PC-9 (cell line): ENCODE measurements at regions of chr2 and their contacts with region 1.

Region 1: DNA sequence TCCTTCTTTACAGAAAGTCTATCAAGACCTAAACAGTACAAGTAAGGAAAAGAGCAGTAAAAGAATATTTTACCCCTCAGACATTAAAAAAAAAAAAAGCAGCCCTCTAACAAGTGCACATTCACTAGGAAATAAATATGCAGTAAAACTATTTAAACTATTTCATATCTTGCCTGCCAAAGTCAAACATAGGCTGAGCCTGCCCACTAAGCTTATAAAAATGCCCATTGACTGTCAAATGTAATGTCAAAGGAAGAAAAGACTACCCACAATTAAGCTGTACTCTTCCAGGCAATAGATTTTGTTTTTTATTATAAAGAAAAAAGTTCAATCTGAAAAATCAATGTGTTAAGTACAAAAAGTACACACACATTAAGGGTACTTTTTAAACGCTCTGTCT is 11.8 kb downstream of the ALS2 start:
- DNase-seq: no peak
- H3K4me3 ChIP-seq: no peak overlapping the region
- H3K27ac ChIP-seq: no peak overlapping the region
- H3K4me1 ChIP-seq: no peaks in the 10 kb centered on the region
- H3K27me3 ChIP-seq: no peaks in the 10 kb centered on the region
- CTCF ChIP-seq: no peak

Region 2: GRCh38 chr2:201746551-201746950 is 22.4 kb before region 1 on chr2:
- CTCF ChIA-PET with region 1: no interaction called
- POLR2A ChIA-PET with region 1: interaction called, 18 read pairs
- intact Hi-C with region 1: no loop called
- DNase-seq: no peak
- H3K4me3 ChIP-seq: no peak overlapping the region
- H3K27ac ChIP-seq: no peak overlapping the region
- H3K4me1 ChIP-seq: no peaks in the 10 kb centered on the region
- H3K27me3 ChIP-seq: no peaks in the 10 kb centered on the region
- CTCF ChIP-seq: no peak

Region 3: DNA sequence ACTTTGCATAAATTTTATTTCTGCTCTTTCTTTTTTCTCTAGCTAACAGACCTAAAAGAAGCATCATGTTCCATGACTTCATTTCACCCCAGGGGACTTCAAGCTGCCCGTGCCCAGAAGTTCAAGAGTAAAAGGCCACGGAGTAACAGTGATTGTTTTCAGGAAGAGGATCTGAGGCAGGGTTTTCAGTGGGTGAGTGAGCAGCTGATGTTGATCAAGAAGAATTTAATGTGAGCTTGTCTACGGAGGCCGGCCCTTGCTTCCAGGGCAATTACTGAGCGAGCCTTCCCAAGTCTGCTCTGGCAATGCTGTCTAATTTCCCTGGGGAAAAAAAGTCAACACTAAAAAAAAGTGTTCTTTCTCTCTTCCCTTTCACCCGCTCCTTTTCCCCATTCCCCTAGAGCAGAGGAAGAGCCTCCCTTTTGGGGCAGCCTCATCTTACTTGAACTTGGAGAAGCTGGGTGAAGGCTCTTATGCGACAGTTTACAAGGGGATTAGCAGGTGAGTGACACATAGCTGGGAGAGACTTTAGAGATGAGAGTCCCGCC is 38.6 kb after region 1 on chr2:
- CTCF ChIA-PET with region 1: no interaction called
- POLR2A ChIA-PET with region 1: no interaction called
- intact Hi-C with region 1: no loop called
- DNase-seq: no peak
- H3K4me3 ChIP-seq: no peak overlapping the region
- H3K27ac ChIP-seq: no peak overlapping the region
- H3K4me1 ChIP-seq: peaks cover 6% of the 10 kb centered on the region; the same call in 1 of the 2 replicates
- H3K27me3 ChIP-seq: no peaks in the 10 kb centered on the region
- CTCF ChIP-seq: no peak

Region 4: GRCh38 chr2:203002054-203002821 is 1233.3 kb after region 1 on chr2:
- CTCF ChIA-PET with region 1: no interaction called
- POLR2A ChIA-PET with region 1: no interaction called
- intact Hi-C with region 1: no loop called
- DNase-seq: no peak
- H3K4me3 ChIP-seq: no peak overlapping the region
- H3K27ac ChIP-seq: no peak overlapping the region
- H3K4me1 ChIP-seq: no peaks in the 10 kb centered on the region
- H3K27me3 ChIP-seq: no peaks in the 10 kb centered on the region
- CTCF ChIP-seq: no peak